Left cardiac atrium (tissue), 4 donors: ENCODE measurements at regions of chr5 and their contacts with region 1.

Region 1: GRCh38 chr5:19608444-19609002 is 379.5 kb downstream of the CDH18 start:
- DNase-seq: no peak
- ATAC-seq: no peak

Region 2: GRCh38 chr5:18772207-18772874 is 836.2 kb before region 1 on chr5:
- intact Hi-C with region 1: loop called in 1 of 2 experiments (anchors 10 kb)
- DNase-seq: no peak
- ATAC-seq: no peak

Region 3: GRCh38 chr5:19519460-19519859 is 89.1 kb before region 1 on chr5:
- intact Hi-C with region 1: no loop called
- DNase-seq: no peak
- ATAC-seq: no peak